Breast epithelium (tissue), 4 donors: ENCODE measurements at regions of chr10 and their contacts with region 1.

Region 1: DNA sequence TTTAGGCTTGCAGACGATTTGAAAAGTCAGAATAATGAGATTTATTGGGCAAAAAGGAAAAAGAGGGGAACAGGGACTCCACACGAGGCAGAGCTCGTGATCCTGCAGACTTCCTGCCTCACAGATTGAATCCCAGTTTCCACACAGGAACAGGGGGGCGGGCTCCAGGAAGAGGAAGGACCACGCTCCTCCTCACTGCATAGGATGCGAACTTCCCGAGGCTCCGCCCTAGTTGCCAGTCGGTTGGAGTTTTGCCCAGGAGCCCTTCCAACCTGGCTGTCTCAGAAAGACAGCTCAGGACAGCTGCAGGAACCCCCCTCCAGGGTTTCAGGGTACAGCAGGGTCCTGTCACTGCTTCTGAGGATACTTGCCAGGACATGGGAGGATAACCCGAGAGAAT is 488.3 kb upstream of the ADARB2 start:
- DNase-seq: no peak
- H3K4me3 ChIP-seq: no peak overlapping the region
- H3K27ac ChIP-seq: no peak overlapping the region
- H3K4me1 ChIP-seq: no peaks in the 10 kb centered on the region
- H3K27me3 ChIP-seq: no peaks in the 10 kb centered on the region
- CTCF ChIP-seq: no peak
- POLR2A ChIP-seq: no peak

Region 2: GRCh38 chr10:2026936-2027335 is 198.7 kb before region 1 on chr10:
- intact Hi-C with region 1: loop called (anchors 5 kb)
- DNase-seq: no peak
- H3K4me3 ChIP-seq: no peak overlapping the region
- H3K27ac ChIP-seq: no peak overlapping the region
- H3K4me1 ChIP-seq: no peaks in the 10 kb centered on the region
- H3K27me3 ChIP-seq: peaks cover 0 to 3% of the 10 kb centered on the region in 2 donors
- CTCF ChIP-seq: no peak
- POLR2A ChIP-seq: no peak

Region 3: DNA sequence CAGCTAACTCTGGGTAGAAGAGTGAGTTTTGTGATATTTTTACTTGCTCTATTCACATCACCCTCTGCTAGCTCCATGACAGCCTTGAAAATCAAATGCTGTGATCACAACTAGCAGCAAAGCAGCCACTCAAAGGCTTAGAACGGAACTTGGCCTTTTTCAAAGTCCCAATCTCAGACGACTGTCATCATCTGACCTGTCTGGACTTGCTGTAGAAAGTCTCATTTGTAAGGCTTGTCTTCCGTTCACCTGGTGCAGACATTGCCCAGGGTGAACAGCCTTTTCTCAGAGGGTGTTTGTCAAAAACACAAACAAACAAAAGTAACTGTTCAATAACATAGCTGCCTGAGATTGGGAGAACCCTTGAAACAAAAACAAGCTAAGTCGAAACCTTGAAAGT is 29.3 kb before region 1 on chr10:
- intact Hi-C with region 1: no loop called
- DNase-seq: no peak
- H3K4me3 ChIP-seq: no peak overlapping the region
- H3K27ac ChIP-seq: no peak overlapping the region
- H3K4me1 ChIP-seq: no peaks in the 10 kb centered on the region
- H3K27me3 ChIP-seq: no peaks in the 10 kb centered on the region
- CTCF ChIP-seq: no peak
- POLR2A ChIP-seq: no peak